H1 (cell line): ENCODE measurements at regions of chr2 and their contacts with region 1.

Region 1: DNA sequence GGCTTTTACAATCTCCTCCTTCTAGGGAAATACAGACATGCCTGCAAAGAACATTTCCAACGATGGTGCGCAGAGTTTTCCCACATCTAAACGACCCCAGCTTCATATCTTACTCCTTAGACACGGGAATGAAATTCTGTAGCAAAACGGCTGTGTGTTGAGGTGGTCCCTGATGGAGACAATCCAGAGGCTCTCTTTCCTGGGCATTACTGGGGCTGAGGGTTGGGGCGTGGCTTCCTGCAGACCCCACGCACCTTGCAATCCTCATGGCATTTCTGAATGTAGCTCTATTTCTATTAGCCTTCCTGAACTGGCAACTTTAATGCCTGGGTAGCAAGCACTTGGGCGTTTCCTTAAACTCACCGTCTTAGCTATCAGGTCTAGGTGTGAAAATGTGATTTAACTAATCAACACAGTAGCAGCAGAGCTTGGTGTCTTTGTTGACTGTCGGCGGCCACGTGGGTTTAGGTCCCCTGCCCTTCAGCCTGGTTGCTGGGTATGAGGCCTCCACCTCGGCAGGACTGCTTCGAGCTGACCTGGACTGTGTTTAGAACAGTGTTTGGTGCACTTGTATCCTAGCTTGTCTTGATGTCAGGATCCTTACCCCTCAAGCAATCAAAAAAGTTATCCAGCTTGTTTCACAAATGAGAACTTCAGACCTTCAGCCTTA is 242.8 kb downstream of the GBX2 start:
- DNase-seq: no peak
- H3K4me3 ChIP-seq: no peak overlapping the region
- H3K27ac ChIP-seq: no peak overlapping the region
- H3K4me1 ChIP-seq: no peaks in the 10 kb centered on the region; a peak in 3 of 7 replicates
- H3K27me3 ChIP-seq: no peaks in the 10 kb centered on the region
- CTCF ChIP-seq: no peak
- EP300 ChIP-seq: no peak
- POLR2A ChIP-seq: no peak
- RAD21 ChIP-seq: no peak

Region 2: DNA sequence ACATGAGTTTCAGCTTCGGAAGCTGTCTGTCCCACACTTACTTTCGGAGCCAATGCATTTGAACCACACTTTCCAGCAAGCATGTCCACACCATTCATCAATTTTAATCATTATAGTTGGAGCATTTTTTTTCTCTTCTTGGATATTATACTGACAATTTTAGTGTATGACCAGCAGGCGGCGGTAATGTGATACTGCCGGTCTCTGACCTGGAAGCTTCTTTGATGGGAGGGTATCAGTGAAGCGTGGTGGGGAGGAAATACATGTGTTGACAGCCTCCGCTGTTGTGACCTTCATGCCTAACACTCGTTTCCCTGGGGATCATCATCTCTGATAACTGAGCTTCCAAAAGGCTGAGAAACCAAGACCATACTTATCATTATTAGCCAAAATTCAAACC is 11.1 kb after region 1 on chr2:
- CTCF ChIA-PET with region 1: interaction called, 16 read pairs
- POLR2A ChIA-PET with region 1: no interaction called
- DNase-seq: no peak
- H3K4me3 ChIP-seq: no peak overlapping the region
- H3K27ac ChIP-seq: no peak overlapping the region
- H3K4me1 ChIP-seq: 0 out of 7 replicates have a peak, but pooled peaks cover 0 to 2% (median 0%) of the 10 kb centered on the region in 4 experiments
- H3K27me3 ChIP-seq: no peaks in the 10 kb centered on the region; a peak in 1 of 7 replicates
- CTCF ChIP-seq: peak; percentile 28 to 70 (median 60)
- EP300 ChIP-seq: no peak
- POLR2A ChIP-seq: no peak
- RAD21 ChIP-seq: peak; percentile 77 to 78